T-cell (primary cell): ENCODE measurements at regions of chr7 and their contacts with region 1.

Region 1: GRCh38 chr7:28615091-28615490 is 202.8 kb downstream of the CREB5 start:
- DNase-seq: peak in 1 of 35 experiments; percentile 6
- ATAC-seq: no peak
- H3K4me3 ChIP-seq: no peak overlapping the region
- H3K4me3 Mint-ChIP-seq: no peak overlapping the region
- H3K27ac ChIP-seq: no peak overlapping the region
- H3K27ac Mint-ChIP-seq: no peak overlapping the region
- H3K4me1 ChIP-seq: no peaks in the 10 kb centered on the region
- H3K4me1 Mint-ChIP-seq: no peaks in the 10 kb centered on the region
- H3K27me3 ChIP-seq: peaks cover 0 to 6% of the 10 kb centered on the region in 2 experiments
- H3K27me3 Mint-ChIP-seq: peaks cover 0 to 5% of the 10 kb centered on the region in 2 donors

Region 2: DNA sequence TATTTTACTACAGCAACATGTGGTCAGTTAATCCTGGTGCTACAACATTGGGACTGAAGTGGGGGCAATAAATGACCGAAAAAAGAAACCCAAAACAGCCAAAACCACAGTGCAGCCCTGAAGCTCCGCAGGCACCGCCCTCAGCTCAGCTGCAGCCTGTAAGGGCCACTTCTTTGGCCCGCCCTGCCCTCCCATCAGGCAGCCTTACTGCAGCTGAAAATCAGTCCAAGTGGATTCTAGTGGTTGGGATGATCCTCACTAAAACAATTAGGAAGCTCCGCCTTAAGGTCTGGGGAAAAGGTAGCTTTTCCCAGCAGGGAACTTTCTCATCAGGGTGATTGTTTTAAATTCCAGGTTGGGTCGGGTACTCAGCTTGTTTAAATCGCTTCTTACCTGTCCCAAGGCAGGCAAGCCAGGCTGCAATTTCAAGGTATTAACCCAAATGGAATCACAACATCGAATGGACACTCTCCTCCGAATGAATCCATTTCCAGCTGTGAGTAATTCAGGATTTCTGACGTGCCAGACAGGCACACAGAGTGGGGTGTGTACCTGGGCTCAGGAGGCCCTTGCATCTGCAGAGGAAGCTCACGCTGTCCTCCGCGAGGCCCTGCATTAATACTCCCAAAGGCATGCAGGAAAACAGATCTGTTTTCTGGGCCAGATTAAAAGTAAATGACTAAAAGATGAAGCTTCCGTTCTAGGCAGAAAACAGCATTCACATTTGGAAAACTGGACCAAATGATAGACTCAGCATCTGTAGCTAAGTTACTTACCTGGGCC is 98.5 kb before region 1 on chr7:
- CTCF ChIA-PET with region 1: interaction called in 1 of 2 experiments, 10 read pairs
- POLR2A ChIA-PET with region 1: no interaction called
- DNase-seq: no peak
- ATAC-seq: no peak
- H3K4me3 ChIP-seq: no peak overlapping the region
- H3K4me3 Mint-ChIP-seq: no peak overlapping the region
- H3K27ac ChIP-seq: no peak overlapping the region
- H3K27ac Mint-ChIP-seq: no peak overlapping the region
- H3K4me1 ChIP-seq: no peaks in the 10 kb centered on the region
- H3K4me1 Mint-ChIP-seq: peaks cover 0 to 5% (median 0%) of the 10 kb centered on the region in 3 donors
- H3K27me3 ChIP-seq: peaks cover 0 to 4% of the 10 kb centered on the region in 2 experiments
- H3K27me3 Mint-ChIP-seq: peaks cover 3 to 21% of the 10 kb centered on the region in 2 donors

Region 3: GRCh38 chr7:28678448-28678965 is 63.4 kb after region 1 on chr7:
- CTCF ChIA-PET with region 1: no interaction called
- POLR2A ChIA-PET with region 1: no interaction called
- DNase-seq: no peak
- ATAC-seq: no peak
- H3K4me3 ChIP-seq: no peak overlapping the region
- H3K4me3 Mint-ChIP-seq: no peak overlapping the region
- H3K27ac ChIP-seq: no peak overlapping the region
- H3K27ac Mint-ChIP-seq: no peak overlapping the region
- H3K4me1 ChIP-seq: no peaks in the 10 kb centered on the region
- H3K4me1 Mint-ChIP-seq: no peaks in the 10 kb centered on the region
- H3K27me3 ChIP-seq: peaks cover 0 to 8% of the 10 kb centered on the region in 2 experiments
- H3K27me3 Mint-ChIP-seq: peaks cover 6 to 11% of the 10 kb centered on the region in 2 donors